ENCODE measurements at regions of chr4 and their contacts with region 1.

Region 1: GRCh38 chr4:38730830-38731646 is 51.8 kb downstream of the TLR10 start:
- DNase-seq: peak; percentile 93
- H3K4me3 Mint-ChIP-seq: no peak overlapping the region
- H3K27ac Mint-ChIP-seq: no peak overlapping the region
- H3K4me1 Mint-ChIP-seq: peaks cover 16% of the 10 kb centered on the region
- H3K27me3 Mint-ChIP-seq: no peaks in the 10 kb centered on the region

Region 2: DNA sequence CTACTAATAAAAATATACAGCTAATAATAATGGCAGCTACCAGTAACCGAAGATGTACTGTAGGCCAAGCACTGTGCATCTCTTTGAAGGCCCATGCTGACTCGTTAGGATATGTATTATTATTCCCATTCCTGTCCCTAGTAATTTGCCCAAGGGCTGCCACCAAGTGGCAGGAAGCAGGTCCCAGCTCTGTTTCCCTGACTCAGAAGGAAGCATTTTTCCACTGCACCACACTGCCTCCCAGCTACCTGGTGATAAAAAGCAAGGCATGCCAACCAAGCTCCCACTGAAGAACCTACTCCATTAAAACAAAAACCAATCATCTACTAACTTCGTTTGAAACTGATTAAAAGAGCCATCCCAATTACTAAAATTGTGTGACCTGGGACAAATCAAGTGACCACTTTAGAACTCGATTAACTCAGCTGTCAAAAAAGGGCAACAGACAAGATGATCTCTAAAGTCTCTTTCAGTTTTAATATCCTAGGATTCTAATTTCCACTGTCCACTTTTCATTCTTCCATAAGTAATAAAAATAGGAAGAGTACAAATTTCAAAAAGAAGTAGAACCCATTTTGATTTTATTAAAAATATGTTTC is 928.9 kb before region 1 on chr4:
- CTCF ChIA-PET with region 1: no interaction called
- intact Hi-C with region 1: loop called (anchors 5 kb)
- DNase-seq: peak; percentile 46
- H3K4me3 Mint-ChIP-seq: no peak overlapping the region
- H3K27ac Mint-ChIP-seq: no peak overlapping the region
- H3K4me1 Mint-ChIP-seq: no peaks in the 10 kb centered on the region
- H3K27me3 Mint-ChIP-seq: no peaks in the 10 kb centered on the region

Region 3: DNA sequence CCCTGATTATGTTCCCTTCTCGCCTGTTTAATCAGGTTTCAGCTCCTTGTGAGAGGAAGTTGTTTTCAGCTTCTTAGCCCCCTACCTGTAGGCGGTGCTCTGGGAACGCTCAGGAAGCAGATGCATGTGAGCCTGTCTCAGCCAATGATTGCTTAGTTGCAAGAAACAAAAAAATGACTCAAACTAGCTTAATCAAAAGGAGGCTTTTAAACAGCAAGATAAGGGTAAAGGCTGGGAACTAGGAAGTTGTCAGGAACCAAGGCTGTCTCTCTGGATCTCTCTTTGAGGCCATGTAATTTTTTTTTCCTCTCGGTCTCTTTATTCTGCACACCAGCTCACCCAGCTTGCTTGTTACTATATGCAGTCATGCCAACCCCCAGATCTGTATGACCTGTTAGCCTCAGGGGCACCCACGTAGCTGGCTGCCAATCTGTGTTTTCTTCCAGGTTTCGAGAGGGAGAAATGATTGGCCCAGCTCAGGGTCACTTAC is 661.7 kb before region 1 on chr4:
- CTCF ChIA-PET with region 1: interaction called, 6 read pairs
- intact Hi-C with region 1: loop called (anchors 1 kb)
- DNase-seq: peak; percentile 80
- H3K4me3 Mint-ChIP-seq: no peak overlapping the region
- H3K27ac Mint-ChIP-seq: no peak overlapping the region
- H3K4me1 Mint-ChIP-seq: peaks cover 17% of the 10 kb centered on the region
- H3K27me3 Mint-ChIP-seq: no peaks in the 10 kb centered on the region

Region 4: DNA sequence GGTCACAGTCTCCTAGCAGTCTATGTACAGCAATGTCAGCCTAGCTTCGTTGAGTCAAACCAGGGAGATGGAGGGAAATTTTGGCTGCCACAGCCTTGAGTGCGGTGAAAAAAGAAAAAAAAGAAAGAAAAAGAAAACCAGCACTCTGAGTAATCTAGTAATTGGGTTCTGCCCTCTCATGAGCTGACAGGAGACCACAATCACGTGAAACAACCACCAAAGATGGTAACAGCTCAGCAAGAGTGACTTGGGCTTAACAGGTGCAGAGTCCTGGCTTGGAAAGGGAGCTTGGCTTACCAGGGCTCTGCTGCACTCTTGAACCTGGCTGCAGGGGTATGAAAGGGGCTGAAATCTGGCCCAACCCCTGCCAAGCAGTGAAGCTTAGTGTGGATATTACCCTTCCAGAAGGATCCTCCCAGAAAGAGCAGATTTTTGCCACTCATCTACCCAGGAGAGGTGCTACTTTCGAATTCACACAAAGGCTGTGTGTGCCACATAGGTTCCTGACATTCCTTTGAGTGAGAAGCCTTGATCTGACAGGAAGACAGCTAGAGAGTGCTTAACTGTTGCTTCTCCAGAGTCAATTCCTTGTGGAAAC is 420.5 kb before region 1 on chr4:
- CTCF ChIA-PET with region 1: interaction called, 14 read pairs
- intact Hi-C with region 1: no loop called
- DNase-seq: peak; percentile 89
- H3K4me3 Mint-ChIP-seq: peak overlapping the region; percentile 10
- H3K27ac Mint-ChIP-seq: peak overlapping the region; percentile 72
- H3K4me1 Mint-ChIP-seq: peaks cover 65% of the 10 kb centered on the region
- H3K27me3 Mint-ChIP-seq: peaks cover 2% of the 10 kb centered on the region

Region 5: GRCh38 chr4:38509551-38509950 is 221.5 kb before region 1 on chr4:
- CTCF ChIA-PET with region 1: interaction called, 6 read pairs
- intact Hi-C with region 1: loop called (anchors 5 kb)
- DNase-seq: peak; percentile 62
- H3K4me3 Mint-ChIP-seq: peak overlapping the region; percentile 53
- H3K27ac Mint-ChIP-seq: no peak overlapping the region
- H3K4me1 Mint-ChIP-seq: peaks cover 86% of the 10 kb centered on the region
- H3K27me3 Mint-ChIP-seq: no peaks in the 10 kb centered on the region

Region 6: GRCh38 chr4:38687571-38688011 is 43.4 kb before region 1 on chr4:
- CTCF ChIA-PET with region 1: interaction called, 8 read pairs
- intact Hi-C with region 1: loop called (anchors 2 kb)
- DNase-seq: peak; percentile 50
- H3K4me3 Mint-ChIP-seq: no peak overlapping the region
- H3K27ac Mint-ChIP-seq: peak overlapping the region; percentile 78
- H3K4me1 Mint-ChIP-seq: peaks cover 62% of the 10 kb centered on the region
- H3K27me3 Mint-ChIP-seq: no peaks in the 10 kb centered on the region

Measured in activated naive CD4-positive, alpha-beta T cell treated with anti-CD3 and anti-CD28 coated beads for 36 hours (primary cell).